ENCODE measurements at regions of chr10 and their contacts with region 1.

Region 1: GRCh38 chr10:44847110-44847509 is 64.0 kb upstream of the TMEM72 start:
- DNase-seq: no peak
- H3K4me3 ChIP-seq: no peak overlapping the region
- H3K27ac ChIP-seq: no peak overlapping the region
- H3K4me1 ChIP-seq: no peaks in the 10 kb centered on the region
- H3K27me3 ChIP-seq: peaks cover 26% of the 10 kb centered on the region; the same call in 1 of the 2 replicates
- CTCF ChIP-seq: no peak
- EP300 ChIP-seq: no peak
- RAD21 ChIP-seq: no peak

Region 2: DNA sequence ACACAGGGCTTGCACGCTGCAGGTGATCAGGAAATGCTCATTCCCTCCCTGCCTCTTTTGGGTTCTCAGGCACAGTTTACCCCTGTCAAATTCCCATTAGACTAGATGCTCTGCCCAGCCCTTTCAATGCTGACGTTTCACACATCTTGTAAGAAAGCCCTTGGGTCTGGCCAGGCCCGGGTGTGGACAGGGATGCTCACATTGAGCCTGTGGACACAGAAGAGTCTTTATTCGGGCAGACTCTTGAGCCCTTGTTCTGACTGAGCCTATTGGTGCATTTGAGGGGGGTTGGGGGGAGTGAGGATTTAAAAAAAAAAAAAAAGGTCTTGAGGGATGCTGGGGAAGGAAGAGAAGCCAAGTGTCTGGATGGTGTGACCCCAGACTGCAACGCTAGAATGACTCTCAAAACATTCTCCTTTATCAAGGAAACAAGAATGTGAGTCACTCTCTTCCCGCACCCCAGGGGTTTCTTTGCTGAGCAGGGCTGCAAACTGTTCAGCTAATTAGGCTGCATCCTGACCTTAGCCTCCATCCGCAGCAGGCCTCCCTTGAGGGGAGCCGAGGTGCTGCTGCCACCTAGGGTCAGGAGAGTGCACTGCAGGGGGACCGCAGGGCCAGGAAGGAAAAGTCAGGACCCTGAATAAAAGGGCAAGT is 10.4 kb after region 1 on chr10:
- CTCF ChIA-PET with region 1: interaction called, 22 read pairs
- POLR2A ChIA-PET with region 1: no interaction called
- DNase-seq: peak; percentile 85
- H3K4me3 ChIP-seq: peak overlapping the region in 1 of 2 experiments; percentile 27; a peak in 1 of 4 replicates
- H3K27ac ChIP-seq: no peak overlapping the region
- H3K4me1 ChIP-seq: peaks cover 0 to 10% of the 10 kb centered on the region in 2 experiments; a peak in 2 of 4 replicates
- H3K27me3 ChIP-seq: no peaks in the 10 kb centered on the region
- CTCF ChIP-seq: peak; percentile 99
- EP300 ChIP-seq: no peak
- RAD21 ChIP-seq: peak; percentile 81

Measured in SK-N-SH (cell line).